Natural killer cell (primary cell): ENCODE measurements at regions of chr2 and their contacts with region 1.

Region 1: GRCh38 chr2:173754169-173754568 is 211.0 kb downstream of the SP3 start:
- DNase-seq: no peak
- ATAC-seq: no peak
- H3K4me3 ChIP-seq: no peak overlapping the region
- H3K4me3 Mint-ChIP-seq: no peak overlapping the region
- H3K27ac ChIP-seq: no peak overlapping the region
- H3K27ac Mint-ChIP-seq: no peak overlapping the region
- H3K4me1 ChIP-seq: no peaks in the 10 kb centered on the region
- H3K4me1 Mint-ChIP-seq: no peaks in the 10 kb centered on the region
- H3K27me3 ChIP-seq: no peaks in the 10 kb centered on the region
- H3K27me3 Mint-ChIP-seq: peaks cover 10 to 11% of the 10 kb centered on the region in 2 donors
- CTCF ChIP-seq: no peak

Region 2: GRCh38 chr2:173741759-173742158 is 12.4 kb before region 1 on chr2:
- intact Hi-C with region 1: loop called (anchors 1 kb)
- DNase-seq: no peak
- ATAC-seq: peak in 1 of 3 donors; percentile 41
- H3K4me3 ChIP-seq: no peak overlapping the region
- H3K4me3 Mint-ChIP-seq: no peak overlapping the region
- H3K27ac ChIP-seq: no peak overlapping the region
- H3K27ac Mint-ChIP-seq: no peak overlapping the region
- H3K4me1 ChIP-seq: no peaks in the 10 kb centered on the region
- H3K4me1 Mint-ChIP-seq: peaks cover 0 to 5% of the 10 kb centered on the region in 2 donors
- H3K27me3 ChIP-seq: no peaks in the 10 kb centered on the region
- H3K27me3 Mint-ChIP-seq: peaks cover 14 to 27% of the 10 kb centered on the region in 2 donors
- CTCF ChIP-seq: no peak